Astrocyte of the cerebellum (primary cell): ENCODE measurements at regions of chr2 and their contacts with region 1.

Region 1: GRCh38 chr2:17375260-17375659 is 143.0 kb downstream of the RAD51AP2 start:
- DNase-seq: no peak
- H3K4me3 ChIP-seq: no peak overlapping the region
- CTCF ChIP-seq: no peak

Region 2: GRCh38 chr2:17413036-17413435 is 37.8 kb after region 1 on chr2:
- in situ Hi-C with region 1: loop called (anchors 5 kb)
- DNase-seq: peak; percentile 83
- H3K4me3 ChIP-seq: no peak overlapping the region
- CTCF ChIP-seq: no peak

Region 3: GRCh38 chr2:17506736-17507616 is 131.7 kb after region 1 on chr2:
- in situ Hi-C with region 1: no loop called
- DNase-seq: no peak
- H3K4me3 ChIP-seq: no peak overlapping the region
- CTCF ChIP-seq: no peak